ENCODE measurements at regions of chr2 and their contacts with region 1.

Region 1: DNA sequence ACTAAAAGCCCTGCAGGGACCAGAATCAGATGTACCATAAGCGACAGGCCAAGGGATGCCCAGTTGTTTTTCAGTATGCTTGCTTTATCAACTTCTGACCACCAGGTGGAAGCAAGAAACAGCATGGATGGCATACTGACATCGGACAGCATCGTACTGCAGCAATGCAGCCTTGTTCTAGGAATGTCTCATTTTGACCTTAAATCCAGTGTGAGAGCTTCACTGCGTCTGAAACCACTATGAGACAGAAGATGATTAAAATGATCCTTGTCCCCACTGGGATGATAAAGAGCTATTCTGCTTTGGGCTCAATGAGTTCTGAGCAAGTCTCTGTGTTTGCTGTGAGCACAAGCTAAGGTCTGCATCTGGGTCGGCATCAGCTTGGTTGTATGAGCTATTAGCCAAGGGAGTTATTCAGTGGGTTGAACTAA is 54.3 kb downstream of the CDK15 start:
- DNase-seq: peak; percentile 46
- H3K4me3 ChIP-seq: no peak overlapping the region
- H3K27ac ChIP-seq: no peak overlapping the region
- H3K4me1 ChIP-seq: no peaks in the 10 kb centered on the region
- H3K27me3 ChIP-seq: no peaks in the 10 kb centered on the region
- CTCF ChIP-seq: peak; percentile 70

Region 2: GRCh38 chr2:201807452-201807999 is 53.1 kb before region 1 on chr2:
- intact Hi-C with region 1: loop called (anchors 10 kb)
- DNase-seq: peak; percentile 22
- H3K4me3 ChIP-seq: no peak overlapping the region
- H3K27ac ChIP-seq: no peak overlapping the region
- H3K4me1 ChIP-seq: no peaks in the 10 kb centered on the region
- H3K27me3 ChIP-seq: no peaks in the 10 kb centered on the region
- CTCF ChIP-seq: no peak

Region 3: GRCh38 chr2:202056392-202057010 is 195.8 kb after region 1 on chr2:
- intact Hi-C with region 1: loop called (anchors 10 kb)
- DNase-seq: no peak
- H3K4me3 ChIP-seq: no peak overlapping the region
- H3K27ac ChIP-seq: no peak overlapping the region
- H3K4me1 ChIP-seq: no peaks in the 10 kb centered on the region
- H3K27me3 ChIP-seq: no peaks in the 10 kb centered on the region
- CTCF ChIP-seq: no peak

Measured in colonic mucosa (tissue), 4 donors.